T-cell (primary cell): ENCODE measurements at regions of chr3 and their contacts with region 1.

Region 1: DNA sequence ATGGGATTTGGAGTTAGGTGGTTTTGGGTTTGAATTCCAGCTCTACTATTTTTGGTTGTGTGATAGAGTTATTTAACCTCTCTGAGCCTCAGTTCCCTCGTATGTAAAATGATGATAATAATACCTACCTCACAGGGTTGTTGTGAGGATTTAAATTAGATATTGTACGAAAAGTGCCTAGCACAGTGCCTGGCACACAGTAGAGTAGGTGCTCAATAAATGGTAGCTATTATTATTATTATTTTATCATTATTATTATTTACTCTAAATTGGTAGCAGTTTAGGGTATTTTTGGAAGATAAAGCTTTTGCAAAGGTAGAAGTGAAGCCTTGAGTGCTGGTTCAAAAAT is 1.3 kb upstream of the AP2M1 start:
- DNase-seq: no peak
- ATAC-seq: no peak
- H3K4me3 ChIP-seq: no peak overlapping the region
- H3K4me3 Mint-ChIP-seq: no peak overlapping the region
- H3K27ac ChIP-seq: no peak overlapping the region
- H3K27ac Mint-ChIP-seq: no peak overlapping the region
- H3K4me1 ChIP-seq: peaks cover 6 to 39% of the 10 kb centered on the region in 2 experiments
- H3K4me1 Mint-ChIP-seq: peaks cover 29 to 41% (median 30%) of the 10 kb centered on the region in 3 donors
- H3K27me3 ChIP-seq: no peaks in the 10 kb centered on the region
- H3K27me3 Mint-ChIP-seq: no peaks in the 10 kb centered on the region

Region 2: GRCh38 chr3:183991403-183991802 is 181.9 kb before region 1 on chr3:
- CTCF ChIA-PET with region 1: no interaction called
- POLR2A ChIA-PET with region 1: interaction called in 1 of 2 experiments, 10 read pairs
- DNase-seq: no peak
- ATAC-seq: no peak
- H3K4me3 ChIP-seq: no peak overlapping the region
- H3K4me3 Mint-ChIP-seq: no peak overlapping the region
- H3K27ac ChIP-seq: no peak overlapping the region
- H3K27ac Mint-ChIP-seq: no peak overlapping the region
- H3K4me1 ChIP-seq: no peaks in the 10 kb centered on the region
- H3K4me1 Mint-ChIP-seq: no peaks in the 10 kb centered on the region
- H3K27me3 ChIP-seq: no peaks in the 10 kb centered on the region
- H3K27me3 Mint-ChIP-seq: no peaks in the 10 kb centered on the region

Region 3: GRCh38 chr3:184290331-184290730 is 117.0 kb after region 1 on chr3:
- CTCF ChIA-PET with region 1: no interaction called
- POLR2A ChIA-PET with region 1: no interaction called
- DNase-seq: no peak
- ATAC-seq: no peak
- H3K4me3 ChIP-seq: no peak overlapping the region
- H3K4me3 Mint-ChIP-seq: no peak overlapping the region
- H3K27ac ChIP-seq: no peak overlapping the region
- H3K27ac Mint-ChIP-seq: no peak overlapping the region
- H3K4me1 ChIP-seq: peaks cover 0 to 4% of the 10 kb centered on the region in 2 experiments
- H3K4me1 Mint-ChIP-seq: no peaks in the 10 kb centered on the region
- H3K27me3 ChIP-seq: peaks cover 0 to 23% of the 10 kb centered on the region in 2 experiments
- H3K27me3 Mint-ChIP-seq: peaks cover 18 to 21% of the 10 kb centered on the region in 2 donors

Region 4: GRCh38 chr3:184808021-184808420 is 634.7 kb after region 1 on chr3:
- CTCF ChIA-PET with region 1: no interaction called
- POLR2A ChIA-PET with region 1: no interaction called
- DNase-seq: no peak
- ATAC-seq: no peak
- H3K4me3 ChIP-seq: no peak overlapping the region
- H3K4me3 Mint-ChIP-seq: no peak overlapping the region
- H3K27ac ChIP-seq: no peak overlapping the region
- H3K27ac Mint-ChIP-seq: no peak overlapping the region
- H3K4me1 ChIP-seq: peaks cover 14 to 16% of the 10 kb centered on the region in 2 experiments
- H3K4me1 Mint-ChIP-seq: peaks cover 12 to 20% (median 16%) of the 10 kb centered on the region in 3 donors
- H3K27me3 ChIP-seq: no peaks in the 10 kb centered on the region
- H3K27me3 Mint-ChIP-seq: no peaks in the 10 kb centered on the region